ENCODE measurements at regions of chr1 and their contacts with region 1.

Region 1: DNA sequence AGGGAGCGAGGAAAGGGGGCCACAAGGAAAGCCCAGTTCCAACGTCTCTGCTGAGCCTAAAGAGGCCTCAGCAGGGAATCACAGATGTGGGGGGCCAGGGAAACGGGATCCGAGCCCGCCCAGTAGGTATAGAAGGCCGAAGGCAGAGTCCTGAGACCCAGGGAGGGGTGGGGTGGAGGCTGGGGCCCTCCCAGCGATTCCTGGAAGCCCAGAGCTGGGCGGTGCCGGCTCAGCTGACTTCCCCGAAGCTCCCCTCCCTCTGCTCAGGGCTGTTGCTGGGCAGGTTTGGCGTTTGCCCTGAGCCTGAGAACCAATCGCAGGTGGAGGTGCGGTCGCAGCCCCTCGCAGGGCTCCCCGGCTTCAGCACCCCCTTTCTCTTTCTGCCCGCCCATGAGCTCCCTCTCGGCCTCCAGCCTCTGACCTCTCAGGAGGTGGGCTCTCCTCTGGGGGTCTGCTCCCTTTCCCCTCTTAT is 12.8 kb downstream of the ADAMTSL4 start:
- DNase-seq: peak; percentile 93
- H3K4me3 Mint-ChIP-seq: peak overlapping the region; percentile 84
- H3K27ac Mint-ChIP-seq: peak overlapping the region; percentile 98
- H3K4me1 Mint-ChIP-seq: peaks cover 65% of the 10 kb centered on the region
- H3K27me3 Mint-ChIP-seq: no peaks in the 10 kb centered on the region

Region 2: DNA sequence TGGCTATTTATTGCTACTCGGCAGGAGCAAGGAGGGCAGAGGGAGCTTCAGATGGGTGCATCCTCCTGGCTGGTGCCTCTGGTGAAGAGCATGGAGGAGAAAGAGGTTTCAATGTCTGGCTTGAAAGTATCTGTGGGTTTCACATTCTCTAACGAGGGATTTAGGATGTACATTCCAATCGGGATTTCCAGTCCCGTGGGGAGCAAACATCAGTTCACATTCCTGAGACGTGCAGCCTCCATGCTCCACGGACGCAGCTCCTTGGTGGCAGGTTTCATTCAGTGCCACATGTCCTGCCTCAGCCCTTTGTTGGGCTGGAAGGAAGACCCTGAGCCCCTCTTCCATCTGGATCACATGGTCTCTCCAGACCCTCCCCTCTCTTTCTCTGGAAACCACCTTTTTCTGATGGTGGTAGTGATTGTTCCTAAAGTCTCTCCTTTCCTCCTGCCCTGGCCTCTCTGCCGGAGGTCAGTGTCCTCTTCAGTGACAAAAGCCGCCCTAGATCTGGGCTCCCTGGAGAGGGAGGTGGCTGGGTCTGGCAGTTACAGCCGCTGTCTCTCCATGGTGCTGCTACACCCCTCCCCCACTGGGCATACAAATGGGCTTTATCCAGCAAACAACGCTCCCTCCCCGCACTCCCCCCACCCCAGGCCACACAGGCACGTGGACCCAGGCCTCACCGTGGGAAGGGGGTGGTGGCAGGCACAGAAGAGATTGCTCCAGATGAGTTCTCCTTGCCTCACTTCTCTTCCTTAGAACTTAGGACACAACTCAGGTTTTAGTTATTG is 305.3 kb before region 1 on chr1:
- CTCF ChIA-PET with region 1: interaction called, 10 read pairs
- POLR2A ChIA-PET with region 1: no interaction called
- DNase-seq: no peak
- H3K4me3 Mint-ChIP-seq: no peak overlapping the region
- H3K27ac Mint-ChIP-seq: no peak overlapping the region
- H3K4me1 Mint-ChIP-seq: peaks cover 13% of the 10 kb centered on the region
- H3K27me3 Mint-ChIP-seq: peaks cover 50% of the 10 kb centered on the region

Region 3: GRCh38 chr1:150548632-150549495 is 13.1 kb before region 1 on chr1 and contains the start of gene ADAMTSL4:
- CTCF ChIA-PET with region 1: interaction called, 84 read pairs
- POLR2A ChIA-PET with region 1: no interaction called
- DNase-seq: peak; percentile 40
- H3K4me3 Mint-ChIP-seq: peak within 1 kb of the TSS; percentile 68
- H3K27ac Mint-ChIP-seq: peak within 1 kb of the TSS; percentile 50
- H3K4me1 Mint-ChIP-seq: peaks cover 30% of the 10 kb centered on the region
- H3K27me3 Mint-ChIP-seq: peaks cover 30% of the 10 kb centered on the region
- total RNA-seq, gene ADAMTSL4: 0.06 to 0.15 TPM

Region 4: GRCh38 chr1:150578965-150579798 is 17.2 kb after region 1 on chr1 and contains the start of gene MCL1:
- CTCF ChIA-PET with region 1: interaction called, 158 read pairs
- POLR2A ChIA-PET with region 1: interaction called, 50 read pairs
- DNase-seq: peak; percentile 93
- H3K4me3 Mint-ChIP-seq: peak within 1 kb of the TSS; percentile 99
- H3K27ac Mint-ChIP-seq: peak within 1 kb of the TSS; percentile 98
- H3K4me1 Mint-ChIP-seq: peaks cover 25% of the 10 kb centered on the region
- H3K27me3 Mint-ChIP-seq: no peaks in the 10 kb centered on the region
- total RNA-seq, gene MCL1: 260 to 311 TPM

Region 5: GRCh38 chr1:150629115-150629928 is 67.3 kb after region 1 on chr1 and contains the start of gene ENSA:
- CTCF ChIA-PET with region 1: interaction called, 15 read pairs
- POLR2A ChIA-PET with region 1: interaction called, 3 read pairs
- DNase-seq: peak; percentile 98
- H3K4me3 Mint-ChIP-seq: no peak within 1 kb of the TSS
- H3K27ac Mint-ChIP-seq: no peak within 1 kb of the TSS
- H3K4me1 Mint-ChIP-seq: peaks cover 27% of the 10 kb centered on the region
- H3K27me3 Mint-ChIP-seq: no peaks in the 10 kb centered on the region
- total RNA-seq, gene ENSA: 192 to 193 TPM

Region 6: DNA sequence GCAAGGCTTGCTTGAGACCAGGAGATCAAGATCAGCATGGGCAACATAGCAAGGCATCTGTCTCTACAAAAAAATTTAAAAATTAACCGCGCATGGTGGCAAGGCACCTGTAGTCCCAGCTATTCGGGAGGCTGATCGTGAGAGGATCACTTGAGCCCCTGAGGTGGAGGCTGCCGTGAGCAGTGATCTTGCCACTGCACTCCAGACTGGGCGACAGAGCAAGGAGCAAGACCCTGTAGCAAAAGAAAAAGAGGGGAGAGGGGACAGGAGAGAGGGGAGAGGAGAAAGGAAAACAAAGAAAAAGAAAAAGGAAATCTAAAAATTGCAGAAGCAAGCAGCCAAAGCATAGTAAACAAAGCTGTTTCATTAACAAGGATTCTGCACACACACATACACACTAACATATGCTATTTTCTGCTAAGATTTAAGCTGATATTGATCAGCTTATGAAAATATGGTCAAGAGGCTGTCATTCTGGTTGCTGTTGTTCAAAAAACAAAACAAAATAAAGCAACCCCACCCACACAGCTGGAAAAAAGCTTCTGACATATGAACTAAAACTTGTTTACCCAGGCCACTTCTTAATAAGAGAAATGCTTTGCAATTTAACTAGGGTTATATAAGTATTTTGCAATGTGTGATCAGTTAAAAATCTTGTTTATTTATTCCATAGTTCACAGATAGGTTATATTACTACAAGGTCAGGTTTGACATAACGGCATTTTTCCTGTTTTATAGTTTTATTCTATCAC is 312.6 kb after region 1 on chr1:
- CTCF ChIA-PET with region 1: no interaction called
- POLR2A ChIA-PET with region 1: no interaction called
- DNase-seq: no peak
- H3K4me3 Mint-ChIP-seq: peak overlapping the region; percentile 95
- H3K27ac Mint-ChIP-seq: peak overlapping the region; percentile 94
- H3K4me1 Mint-ChIP-seq: peaks cover 39% of the 10 kb centered on the region
- H3K27me3 Mint-ChIP-seq: no peaks in the 10 kb centered on the region

Region 7: DNA sequence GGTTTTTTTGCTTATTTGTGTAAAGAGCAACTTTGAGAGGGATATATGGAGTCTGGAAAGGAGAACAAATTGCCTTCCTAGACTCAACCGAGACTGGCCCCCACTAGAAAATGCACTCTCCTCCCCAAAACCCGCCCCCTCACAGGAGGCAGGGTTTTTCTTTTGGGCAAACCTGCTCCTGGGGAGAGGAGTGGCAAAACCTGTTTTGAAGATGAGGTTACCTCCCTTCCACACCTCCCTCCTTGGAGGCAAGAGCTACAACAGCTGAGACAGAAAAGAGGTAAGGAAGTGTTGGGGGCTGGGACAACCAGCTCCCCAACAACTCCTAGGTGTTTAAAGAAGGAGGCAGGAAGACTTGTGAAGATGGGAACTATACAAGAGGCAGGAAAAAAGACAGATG is 474.4 kb after region 1 on chr1 and contains the start of gene BNIPL:
- CTCF ChIA-PET with region 1: no interaction called
- POLR2A ChIA-PET with region 1: no interaction called
- DNase-seq: no peak
- H3K4me3 Mint-ChIP-seq: no peak within 1 kb of the TSS
- H3K27ac Mint-ChIP-seq: no peak within 1 kb of the TSS
- H3K4me1 Mint-ChIP-seq: peaks cover 6% of the 10 kb centered on the region
- H3K27me3 Mint-ChIP-seq: no peaks in the 10 kb centered on the region
- total RNA-seq, gene BNIPL: 0.99 to 1.5 TPM